ENCODE measurements at regions of chr1 and their contacts with region 1.

Region 1: DNA sequence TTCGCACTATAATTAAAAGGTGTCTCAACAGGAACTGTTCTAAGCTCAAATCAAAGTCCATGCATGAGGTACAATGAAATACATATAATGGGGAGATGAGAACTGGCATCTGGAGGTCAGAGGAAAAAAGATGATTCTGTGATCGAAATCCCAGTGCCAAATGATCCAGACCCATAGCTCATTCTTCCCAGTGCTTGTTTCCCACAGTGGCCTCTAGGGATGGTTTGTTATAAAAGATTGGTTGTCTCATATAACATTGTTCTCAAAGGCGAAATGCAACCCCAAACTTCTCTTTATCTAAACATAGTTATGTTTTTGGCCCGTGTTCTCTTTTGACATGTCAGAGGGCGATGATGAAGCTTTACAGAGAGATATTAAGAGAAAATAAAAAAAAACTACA is 234.7 kb upstream of the RRP15 start:
- DNase-seq: no peak
- H3K4me3 ChIP-seq: peak overlapping the region in 1 of 2 donors; percentile 16
- H3K27ac ChIP-seq: no peak overlapping the region
- H3K4me1 ChIP-seq: no peaks in the 10 kb centered on the region
- H3K27me3 ChIP-seq: no peaks in the 10 kb centered on the region
- CTCF ChIP-seq: no peak
- POLR2A ChIP-seq: no peak

Region 2: GRCh38 chr1:216081445-216081844 is 1968.9 kb before region 1 on chr1:
- intact Hi-C with region 1: loop called (anchors 10 kb)
- DNase-seq: no peak
- H3K4me3 ChIP-seq: no peak overlapping the region
- H3K27ac ChIP-seq: no peak overlapping the region
- H3K4me1 ChIP-seq: no peaks in the 10 kb centered on the region
- H3K27me3 ChIP-seq: no peaks in the 10 kb centered on the region
- CTCF ChIP-seq: no peak
- POLR2A ChIP-seq: no peak

Region 3: GRCh38 chr1:217955723-217956122 is 94.7 kb before region 1 on chr1:
- intact Hi-C with region 1: no loop called
- DNase-seq: no peak
- H3K4me3 ChIP-seq: no peak overlapping the region
- H3K27ac ChIP-seq: no peak overlapping the region
- H3K4me1 ChIP-seq: no peaks in the 10 kb centered on the region
- H3K27me3 ChIP-seq: no peaks in the 10 kb centered on the region
- CTCF ChIP-seq: no peak
- POLR2A ChIP-seq: no peak

Region 4: GRCh38 chr1:218330043-218330623 is 279.7 kb after region 1 on chr1:
- intact Hi-C with region 1: no loop called
- DNase-seq: no peak
- H3K4me3 ChIP-seq: no peak overlapping the region
- H3K27ac ChIP-seq: no peak overlapping the region
- H3K4me1 ChIP-seq: no peaks in the 10 kb centered on the region
- H3K27me3 ChIP-seq: no peaks in the 10 kb centered on the region
- CTCF ChIP-seq: peak; percentile 63 to 79 (median 69)
- POLR2A ChIP-seq: no peak

Region 5: GRCh38 chr1:219676012-219676765 is 1625.8 kb after region 1 on chr1:
- intact Hi-C with region 1: no loop called
- DNase-seq: no peak
- H3K4me3 ChIP-seq: no peak overlapping the region
- H3K27ac ChIP-seq: no peak overlapping the region
- H3K4me1 ChIP-seq: no peaks in the 10 kb centered on the region
- H3K27me3 ChIP-seq: no peaks in the 10 kb centered on the region
- CTCF ChIP-seq: no peak
- POLR2A ChIP-seq: no peak